Gastrocnemius medialis (tissue), 4 donors: ENCODE measurements at regions of chr17 and their contacts with region 1.

Region 1: GRCh38 chr17:49191917-49192741 is 18.2 kb downstream of the GNGT2 start:
- DNase-seq: peak; percentile 83 to 88
- ATAC-seq: peak; percentile 90 to 93
- H3K4me3 ChIP-seq: peak overlapping the region; percentile 68 to 92 (median 86)
- H3K27ac ChIP-seq: peak overlapping the region; percentile 93 to 99 (median 97)
- H3K4me1 ChIP-seq: peaks cover 0 to 3% of the 10 kb centered on the region in 2 donors
- H3K27me3 ChIP-seq: no peaks in the 10 kb centered on the region
- CTCF ChIP-seq: peak; percentile 11 to 45 (median 32)
- POLR2A ChIP-seq: peak; percentile 58 to 63

Region 2: GRCh38 chr17:48830840-48831548 is 361.1 kb before region 1 on chr17 and contains the start of gene CALCOCO2:
- in situ Hi-C with region 1: no loop called
- intact Hi-C with region 1: loop called (anchors 5 kb)
- DNase-seq: peak; percentile 93 to 94
- ATAC-seq: peak; percentile 93 to 95
- H3K4me3 ChIP-seq: peak within 1 kb of the TSS; percentile 90 to 95 (median 92)
- H3K27ac ChIP-seq: peak within 1 kb of the TSS; percentile 98 to 99 (median 98)
- H3K4me1 ChIP-seq: peaks cover 43 to 47% of the 10 kb centered on the region in 2 donors
- H3K27me3 ChIP-seq: no peaks in the 10 kb centered on the region
- CTCF ChIP-seq: peak in 4 of 5 experiments; percentile 9 to 13 (median 10)
- POLR2A ChIP-seq: peak; percentile 93 to 96
- total RNA-seq, gene CALCOCO2: 104 to 237 (median 132) TPM

Region 3: DNA sequence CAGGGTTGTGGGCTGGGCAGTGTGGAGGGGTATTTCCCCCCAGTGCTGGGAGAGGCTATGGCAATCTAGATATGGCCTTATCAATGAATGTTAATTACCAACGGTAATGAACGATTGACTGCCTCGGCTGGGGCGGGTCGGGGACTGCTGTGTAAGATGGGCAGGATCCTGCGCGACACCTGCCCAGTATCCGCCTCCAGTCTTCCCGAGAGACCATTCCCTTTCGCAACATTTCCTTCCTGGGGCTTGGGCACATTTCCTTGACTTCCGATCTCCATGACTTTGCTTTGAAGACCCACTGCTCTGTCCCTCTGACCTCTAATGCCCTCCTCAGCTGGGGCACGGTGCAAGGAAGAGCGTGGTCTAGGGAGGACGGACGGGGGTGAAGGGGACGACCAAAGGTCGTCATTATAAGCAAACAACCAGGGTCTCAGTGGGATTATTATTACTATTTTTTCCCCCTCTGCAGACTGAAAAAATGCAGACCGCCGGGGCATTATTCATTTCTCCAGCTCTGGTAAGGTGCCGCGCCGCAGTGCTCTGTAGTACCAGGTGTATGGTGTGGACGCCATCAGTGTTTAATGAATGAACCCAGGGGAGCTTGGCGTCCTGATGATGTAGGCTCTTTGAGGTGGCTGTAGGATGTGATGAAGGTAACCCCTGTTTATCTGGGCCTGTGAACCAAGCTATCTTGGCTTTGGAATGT is 299.0 kb before region 1 on chr17:
- in situ Hi-C with region 1: no loop called
- intact Hi-C with region 1: no loop called
- DNase-seq: no peak
- ATAC-seq: peak in 1 of 2 donors; percentile 11
- H3K4me3 ChIP-seq: peak overlapping the region; percentile 66 to 88 (median 76)
- H3K27ac ChIP-seq: peak overlapping the region; percentile 85 to 95 (median 92)
- H3K4me1 ChIP-seq: peaks cover 17 to 22% of the 10 kb centered on the region in 2 donors
- H3K27me3 ChIP-seq: no peaks in the 10 kb centered on the region
- CTCF ChIP-seq: no peak
- POLR2A ChIP-seq: no peak

Region 4: DNA sequence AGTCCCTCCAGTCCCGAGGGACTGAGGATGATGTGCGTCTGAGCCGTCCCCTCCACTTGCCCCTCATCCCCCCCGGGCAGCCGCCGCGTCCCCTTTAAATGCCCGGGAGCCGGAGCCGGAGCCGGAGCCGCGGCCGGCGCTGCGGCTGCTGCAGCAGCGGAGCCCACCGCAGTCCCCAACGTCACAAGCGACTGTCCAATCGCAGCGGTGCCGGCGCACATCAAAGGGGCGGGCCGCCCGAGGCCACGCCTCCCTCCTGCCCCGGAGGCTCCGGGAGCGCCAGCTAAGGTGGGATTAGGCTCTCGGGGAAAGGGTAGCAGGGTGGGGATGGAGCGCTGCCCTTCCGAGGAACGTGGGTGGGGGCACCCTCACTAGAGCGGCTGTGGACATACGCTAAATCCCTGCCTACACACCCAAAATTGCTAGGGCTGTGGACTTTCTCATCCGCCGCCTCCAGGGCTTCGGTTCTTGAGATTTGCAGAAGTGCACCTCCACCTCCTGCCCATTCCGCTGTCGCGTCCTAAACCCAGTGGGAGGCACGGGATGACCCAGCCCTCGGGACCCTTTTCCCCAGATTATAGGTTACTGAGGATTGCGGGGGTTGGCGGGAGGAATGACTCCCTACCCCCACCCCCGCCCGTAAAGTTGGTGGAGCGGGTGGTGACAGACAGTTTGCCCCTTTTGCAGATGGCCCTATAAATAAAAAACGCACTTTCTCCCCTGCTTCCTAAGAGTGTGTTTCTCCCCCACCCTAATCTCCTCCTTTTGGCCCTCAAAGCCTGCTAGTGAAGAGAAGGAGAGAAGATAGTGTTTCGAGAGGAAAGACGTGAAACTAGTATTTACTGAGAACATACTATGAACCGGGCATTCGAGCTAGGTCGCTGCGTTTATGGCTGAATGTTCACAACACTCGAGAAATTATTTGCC is 38.8 kb after region 1 on chr17 and contains the start of gene PHOSPHO1:
- in situ Hi-C with region 1: no loop called
- intact Hi-C with region 1: loop called (anchors 2 kb)
- DNase-seq: peak; percentile 59 to 73
- ATAC-seq: peak; percentile 88 to 90
- H3K4me3 ChIP-seq: peak within 1 kb of the TSS; percentile 68 to 93 (median 78)
- H3K27ac ChIP-seq: peak within 1 kb of the TSS; percentile 23 to 71 (median 50)
- H3K4me1 ChIP-seq: peaks cover 0 to 21% of the 10 kb centered on the region in 2 donors
- H3K27me3 ChIP-seq: no peaks in the 10 kb centered on the region
- CTCF ChIP-seq: no peak
- POLR2A ChIP-seq: peak; percentile 39 to 66
- total RNA-seq, gene PHOSPHO1: 1.0 to 3.7 (median 2.1) TPM in 3 of 4 donors, not detected in the other

Region 5: DNA sequence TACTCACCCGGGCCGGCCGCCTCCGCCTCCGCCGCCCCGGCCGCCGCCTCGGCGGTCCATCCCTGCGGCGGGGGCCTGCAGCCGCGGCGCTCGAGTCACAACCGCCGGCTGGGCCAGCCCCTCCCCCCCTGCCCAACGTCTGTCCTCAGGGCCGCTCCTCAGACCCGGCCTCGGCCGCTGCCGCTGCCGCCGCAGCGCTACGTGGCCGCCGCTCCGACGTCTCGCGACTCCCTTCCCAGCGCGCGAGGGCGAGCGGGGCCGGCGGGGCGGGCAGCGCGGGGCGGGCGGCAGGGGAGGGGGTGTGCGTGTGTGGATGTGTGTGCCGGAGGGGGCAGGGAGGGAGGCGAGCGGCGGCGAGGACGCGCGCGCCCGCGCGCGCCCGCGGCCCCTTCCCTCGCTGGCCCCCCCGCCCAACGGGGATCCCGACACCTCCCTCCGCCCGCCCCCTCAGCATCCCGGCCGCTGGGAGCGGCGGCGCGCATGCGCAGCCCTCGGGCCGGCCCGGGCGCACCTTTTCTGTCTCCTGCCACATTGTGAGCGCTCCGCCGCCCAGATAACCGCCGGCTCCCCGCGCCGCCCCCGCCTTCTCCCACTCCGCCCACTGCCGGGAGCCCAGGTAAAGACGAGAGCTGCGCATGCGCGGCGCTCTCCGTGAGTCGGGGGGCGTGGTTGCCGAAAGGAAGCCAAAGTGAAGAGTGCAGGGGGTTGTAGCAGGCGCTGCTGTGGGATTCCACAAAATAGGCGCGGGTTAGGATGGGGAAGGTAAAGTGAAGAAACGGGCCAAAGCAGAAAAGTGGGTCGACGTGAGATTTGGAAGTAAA is 170.0 kb after region 1 on chr17 and contains the start of gene ZNF652:
- in situ Hi-C with region 1: no loop called
- intact Hi-C with region 1: loop called (anchors 1 kb)
- DNase-seq: peak; percentile 78 to 86
- ATAC-seq: peak; percentile 87 to 89
- H3K4me3 ChIP-seq: peak within 1 kb of the TSS; percentile 88 to 97 (median 92)
- H3K27ac ChIP-seq: peak within 1 kb of the TSS; percentile 80 to 92 (median 84)
- H3K4me1 ChIP-seq: peaks cover 29 to 33% of the 10 kb centered on the region in 2 donors
- H3K27me3 ChIP-seq: no peaks in the 10 kb centered on the region
- CTCF ChIP-seq: no peak
- POLR2A ChIP-seq: peak; percentile 21 to 43
- total RNA-seq, gene ZNF652: 32.8 to 49.6 (median 41.1) TPM

Region 6: GRCh38 chr17:49414622-49415350 is 222.7 kb after region 1 on chr17 and contains the start of gene PHB1:
- in situ Hi-C with region 1: loop called in 2 of 4 experiments (anchors 10 to 25 kb)
- intact Hi-C with region 1: no loop called
- DNase-seq: peak; percentile 97
- ATAC-seq: peak; percentile 99 to 100
- H3K4me3 ChIP-seq: peak within 1 kb of the TSS; percentile 63 to 97 (median 93)
- H3K27ac ChIP-seq: peak within 1 kb of the TSS; percentile 73 to 90 (median 75)
- H3K4me1 ChIP-seq: peaks cover 14 to 18% of the 10 kb centered on the region in 2 donors
- H3K27me3 ChIP-seq: no peaks in the 10 kb centered on the region
- CTCF ChIP-seq: no peak
- POLR2A ChIP-seq: peak in 1 of 2 donors; percentile 32
- total RNA-seq, gene PHB1: 102 to 137 (median 116) TPM

Region 7: DNA sequence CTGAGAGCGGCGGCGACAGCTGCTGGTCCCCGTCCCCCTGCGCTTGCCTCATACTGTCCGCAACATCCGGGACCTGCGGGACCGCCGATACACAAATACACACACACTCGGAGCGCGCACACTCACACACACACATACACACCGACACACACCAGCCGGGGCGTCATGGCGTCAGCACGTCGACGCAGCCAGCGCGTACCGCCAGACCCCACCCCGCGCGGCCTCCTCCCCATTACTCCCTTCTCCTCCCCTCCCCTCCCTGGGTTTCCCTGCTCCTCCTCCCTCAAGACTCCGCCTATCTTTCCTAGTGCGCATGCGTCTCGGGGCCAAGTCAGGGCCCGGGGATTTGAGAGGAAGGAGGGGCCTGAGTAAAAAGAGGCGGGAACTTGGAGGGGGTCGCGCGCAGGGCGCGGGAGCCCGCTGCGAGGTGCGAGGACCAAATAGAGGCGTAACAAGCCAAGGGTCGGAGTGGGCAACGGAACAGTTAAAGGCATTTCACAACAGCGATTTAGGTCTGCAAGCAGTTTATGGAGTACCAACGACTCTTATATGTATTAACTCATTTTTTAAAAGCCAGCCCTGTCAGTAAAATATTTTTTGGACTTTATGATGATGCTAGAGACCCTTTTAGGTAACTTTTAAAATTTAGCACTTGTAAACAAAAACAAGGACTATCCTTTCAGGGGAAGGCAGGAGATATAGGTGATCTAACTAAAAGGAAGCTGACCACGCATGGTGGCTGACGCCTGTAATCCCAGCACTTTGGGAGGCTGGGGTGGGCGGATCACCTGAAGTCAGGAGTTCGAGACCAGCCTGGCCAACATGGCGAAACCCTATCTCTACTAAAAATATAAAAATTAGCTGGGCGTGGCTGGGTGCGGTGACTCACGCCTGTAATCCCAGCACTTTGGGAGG is 486.1 kb after region 1 on chr17 and contains the start of gene SPOP:
- in situ Hi-C with region 1: no loop called
- intact Hi-C with region 1: loop called (anchors 5 kb)
- DNase-seq: peak; percentile 99 to 100
- ATAC-seq: peak; percentile 88 to 91
- H3K4me3 ChIP-seq: peak within 1 kb of the TSS; percentile 70 to 91 (median 76)
- H3K27ac ChIP-seq: peak within 1 kb of the TSS; percentile 97 to 100 (median 100)
- H3K4me1 ChIP-seq: peaks cover 33 to 40% of the 10 kb centered on the region in 2 donors
- H3K27me3 ChIP-seq: no peaks in the 10 kb centered on the region
- CTCF ChIP-seq: no peak
- POLR2A ChIP-seq: peak in 1 of 2 donors; percentile 5
- total RNA-seq, gene SPOP: 27.5 to 57.5 (median 53.5) TPM

Region 8: GRCh38 chr17:50707289-50708049 is 1515.3 kb after region 1 on chr17 and contains the start of gene ANKRD40:
- in situ Hi-C with region 1: no loop called
- intact Hi-C with region 1: loop called (anchors 5 kb)
- DNase-seq: peak; percentile 90 to 93
- ATAC-seq: peak; percentile 94 to 95
- H3K4me3 ChIP-seq: peak within 1 kb of the TSS; percentile 64 to 83 (median 76)
- H3K27ac ChIP-seq: peak within 1 kb of the TSS; percentile 90 to 97 (median 96)
- H3K4me1 ChIP-seq: peaks cover 42 to 43% of the 10 kb centered on the region in 2 donors
- H3K27me3 ChIP-seq: no peaks in the 10 kb centered on the region
- CTCF ChIP-seq: peak in 2 of 5 experiments; percentile 10 to 26
- POLR2A ChIP-seq: peak; percentile 87 to 88
- total RNA-seq, gene ANKRD40: 97.3 to 135 (median 112) TPM